SK-N-SH (cell line): ENCODE measurements at regions of chr2 and their contacts with region 1.

Region 1: GRCh38 chr2:584863-585823 is 92.1 kb downstream of the TMEM18 start:
- DNase-seq: no peak
- H3K4me3 ChIP-seq: no peak overlapping the region
- H3K27ac ChIP-seq: peak overlapping the region in 1 of 2 experiments; percentile 74; a peak in 2 of 4 replicates
- H3K4me1 ChIP-seq: peaks cover 0 to 39% of the 10 kb centered on the region in 2 experiments; a peak in 2 of 4 replicates
- H3K27me3 ChIP-seq: no peaks in the 10 kb centered on the region
- CTCF ChIP-seq: no peak
- EP300 ChIP-seq: no peak
- RAD21 ChIP-seq: no peak

Region 2: GRCh38 chr2:595831-596592 is 10.9 kb after region 1 on chr2:
- CTCF ChIA-PET with region 1: interaction called, 16 read pairs
- POLR2A ChIA-PET with region 1: no interaction called
- DNase-seq: peak; percentile 86
- H3K4me3 ChIP-seq: no peak overlapping the region
- H3K27ac ChIP-seq: peak overlapping the region in 1 of 2 experiments; percentile 98; a peak in 2 of 4 replicates
- H3K4me1 ChIP-seq: peaks cover 0 to 58% of the 10 kb centered on the region in 2 experiments; a peak in 2 of 4 replicates
- H3K27me3 ChIP-seq: no peaks in the 10 kb centered on the region
- CTCF ChIP-seq: no peak
- EP300 ChIP-seq: peak in 1 of 2 experiments; percentile 68; a peak in 2 of 4 replicates
- RAD21 ChIP-seq: no peak; the same call in 1 of the 2 replicates